ENCODE measurements at regions of chr20 and their contacts with region 1.

Region 1: GRCh38 chr20:20860078-20860806 is 147.8 kb upstream of the RALGAPA2 start:
- DNase-seq: peak; percentile 81
- H3K4me3 ChIP-seq: no peak overlapping the region
- H3K27ac ChIP-seq: no peak overlapping the region
- H3K4me1 ChIP-seq: no peaks in the 10 kb centered on the region
- H3K27me3 ChIP-seq: peaks cover 5 to 7% of the 10 kb centered on the region in 2 experiments
- CTCF ChIP-seq: peak; percentile 89 to 98
- POLR2A ChIP-seq: no peak

Region 2: DNA sequence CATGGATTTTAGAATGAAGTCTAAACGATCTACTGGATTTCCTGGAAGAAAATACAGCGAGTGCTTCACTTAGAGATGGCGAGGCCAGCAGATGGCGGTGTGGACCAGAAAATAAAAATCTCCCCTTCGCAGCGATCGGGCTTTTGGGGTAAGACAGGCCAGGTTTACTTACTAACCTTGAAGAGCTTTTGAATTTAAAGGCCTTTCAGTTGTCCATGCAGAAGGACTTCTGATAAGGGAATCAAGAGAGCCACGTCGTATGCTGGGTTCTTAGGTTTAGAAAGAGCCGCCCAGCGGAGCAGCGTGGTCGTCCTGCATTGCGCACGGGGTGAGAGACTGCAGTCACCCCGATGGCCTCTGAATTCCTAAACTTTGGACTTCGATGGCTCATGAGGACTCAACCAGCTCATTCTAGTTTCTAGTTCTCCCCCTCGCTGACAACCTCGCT is 22.6 kb before region 1 on chr20:
- CTCF ChIA-PET with region 1: interaction called, 14 read pairs
- POLR2A ChIA-PET with region 1: no interaction called
- dilution Hi-C with region 1: no loop called
- intact Hi-C with region 1: no loop called
- DNase-seq: peak; percentile 59
- H3K4me3 ChIP-seq: no peak overlapping the region
- H3K27ac ChIP-seq: no peak overlapping the region
- H3K4me1 ChIP-seq: no peaks in the 10 kb centered on the region
- H3K27me3 ChIP-seq: peaks cover 0 to 3% of the 10 kb centered on the region in 2 experiments
- CTCF ChIP-seq: peak; percentile 64 to 77
- POLR2A ChIP-seq: no peak

Region 3: GRCh38 chr20:20872428-20872827 is 12.2 kb after region 1 on chr20:
- CTCF ChIA-PET with region 1: interaction called, 31 read pairs
- POLR2A ChIA-PET with region 1: no interaction called
- dilution Hi-C with region 1: no loop called
- intact Hi-C with region 1: no loop called
- DNase-seq: no peak
- H3K4me3 ChIP-seq: no peak overlapping the region
- H3K27ac ChIP-seq: no peak overlapping the region
- H3K4me1 ChIP-seq: no peaks in the 10 kb centered on the region
- H3K27me3 ChIP-seq: peaks cover 1 to 3% of the 10 kb centered on the region in 2 experiments
- CTCF ChIP-seq: no peak
- POLR2A ChIP-seq: no peak

Region 4: DNA sequence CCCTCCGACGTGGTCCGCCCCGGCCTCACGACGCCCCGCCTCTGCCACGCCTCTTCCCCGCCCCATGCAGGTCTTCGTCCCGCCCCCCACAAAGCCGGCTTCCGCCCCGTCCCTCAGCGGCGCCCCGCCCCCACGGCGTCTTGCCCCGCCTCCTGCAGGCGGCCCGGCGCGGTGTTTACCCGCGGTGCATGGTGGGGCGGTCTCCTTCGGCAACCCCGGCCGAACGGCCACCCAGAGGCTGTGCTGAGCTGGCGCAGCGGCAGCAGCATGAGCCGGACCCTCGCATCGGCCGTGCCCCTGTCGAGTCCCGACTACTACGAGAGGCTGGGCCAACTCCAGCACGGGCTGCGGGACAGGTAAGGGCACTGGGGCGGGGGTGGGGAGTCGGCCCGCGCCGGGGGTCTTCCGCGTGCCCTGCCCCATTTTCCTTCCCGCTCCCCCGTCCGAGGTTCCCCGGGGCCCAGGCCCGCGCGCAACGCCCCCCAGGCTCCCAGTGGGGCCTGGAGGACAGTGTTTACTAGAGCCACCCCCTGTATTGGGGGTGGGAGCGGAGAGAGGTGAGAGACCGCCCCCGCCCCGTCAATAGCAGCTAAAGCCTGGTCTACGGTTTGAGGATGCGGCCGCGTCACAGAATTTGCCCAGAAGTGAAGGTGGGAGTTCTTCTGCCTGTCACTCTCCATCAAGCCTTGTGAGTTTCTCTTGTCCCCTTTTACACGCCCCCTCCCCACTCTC is 265.8 kb after region 1 on chr20 and contains the start of gene KIZ:
- CTCF ChIA-PET with region 1: interaction called, 4 read pairs
- POLR2A ChIA-PET with region 1: no interaction called
- dilution Hi-C with region 1: no loop called
- intact Hi-C with region 1: loop called (anchors 10 kb)
- DNase-seq: peak; percentile 97
- H3K4me3 ChIP-seq: peak within 1 kb of the TSS; percentile 57 to 97 (median 83)
- H3K27ac ChIP-seq: no peak within 1 kb of the TSS
- H3K4me1 ChIP-seq: peaks cover 13% of the 10 kb centered on the region
- H3K27me3 ChIP-seq: peaks cover 0 to 4% of the 10 kb centered on the region in 2 experiments
- CTCF ChIP-seq: peak in 1 of 2 donors; percentile 45
- POLR2A ChIP-seq: peak; percentile 62
- total RNA-seq, gene KIZ: 7.3 and 9.6 TPM in 2 replicates

Region 5: GRCh38 chr20:21571841-21572690 is 711.8 kb after region 1 on chr20:
- CTCF ChIA-PET with region 1: interaction called, 29 read pairs
- POLR2A ChIA-PET with region 1: no interaction called
- dilution Hi-C with region 1: no loop called
- intact Hi-C with region 1: loop called (anchors 2 kb)
- DNase-seq: peak; percentile 18
- H3K4me3 ChIP-seq: no peak overlapping the region
- H3K27ac ChIP-seq: no peak overlapping the region
- H3K4me1 ChIP-seq: no peaks in the 10 kb centered on the region
- H3K27me3 ChIP-seq: no peaks in the 10 kb centered on the region
- CTCF ChIP-seq: peak; percentile 63 to 85
- POLR2A ChIP-seq: no peak

Region 6: DNA sequence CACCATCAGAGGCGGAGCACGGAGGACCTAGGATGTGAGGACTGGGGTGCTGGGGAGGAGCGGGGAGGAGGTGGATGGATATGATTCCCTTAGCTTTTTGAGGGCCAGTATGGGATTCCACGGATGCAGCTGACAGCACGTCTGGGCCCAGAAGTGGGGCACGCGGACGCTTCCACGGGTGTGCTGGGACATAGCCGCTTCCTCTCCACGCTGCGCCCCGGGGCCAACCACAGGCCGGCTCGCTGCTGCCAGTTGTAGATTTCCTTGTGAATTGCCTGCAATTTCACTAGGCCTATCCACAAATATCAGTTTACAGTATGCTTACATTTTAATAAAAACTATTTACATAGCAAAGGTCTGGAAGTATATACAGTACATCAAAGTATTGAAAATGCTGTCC is 869.1 kb after region 1 on chr20:
- CTCF ChIA-PET with region 1: no interaction called
- POLR2A ChIA-PET with region 1: no interaction called
- dilution Hi-C with region 1: no loop called
- intact Hi-C with region 1: no loop called
- DNase-seq: no peak
- H3K4me3 ChIP-seq: no peak overlapping the region
- H3K27ac ChIP-seq: no peak overlapping the region
- H3K4me1 ChIP-seq: no peaks in the 10 kb centered on the region
- H3K27me3 ChIP-seq: no peaks in the 10 kb centered on the region
- CTCF ChIP-seq: no peak
- POLR2A ChIP-seq: no peak

Measured in endothelial cell of umbilical vein (primary cell).